ENCODE measurements at regions of chr9 and their contacts with region 1.

Region 1: GRCh38 chr9:28692020-28692419 is 1118.7 kb upstream of the C9orf72 start:
- DNase-seq: no peak
- H3K4me3 ChIP-seq: no peak overlapping the region
- H3K27ac ChIP-seq: no peak overlapping the region
- H3K4me1 ChIP-seq: peaks cover 13 to 21% of the 10 kb centered on the region in 2 donors
- H3K27me3 ChIP-seq: no peaks in the 10 kb centered on the region
- CTCF ChIP-seq: no peak
- POLR2A ChIP-seq: no peak

Region 2: GRCh38 chr9:28758341-28758740 is 66.3 kb after region 1 on chr9:
- intact Hi-C with region 1: loop called (anchors 10 kb)
- DNase-seq: no peak
- H3K4me3 ChIP-seq: no peak overlapping the region
- H3K27ac ChIP-seq: no peak overlapping the region
- H3K4me1 ChIP-seq: peaks cover 2 to 4% of the 10 kb centered on the region in 2 donors
- H3K27me3 ChIP-seq: no peaks in the 10 kb centered on the region
- CTCF ChIP-seq: no peak
- POLR2A ChIP-seq: no peak